A673 (cell line): ENCODE measurements at regions of chr13 and their contacts with region 1.

Region 1: GRCh38 chr13:81722456-81722855 is 1381.5 kb upstream of the SPRY2 start:
- DNase-seq: no peak
- H3K4me3 ChIP-seq: no peak overlapping the region
- H3K27ac ChIP-seq: no peak overlapping the region
- H3K4me1 ChIP-seq: no peaks in the 10 kb centered on the region
- H3K27me3 ChIP-seq: no peaks in the 10 kb centered on the region
- CTCF ChIP-seq: no peak

Region 2: DNA sequence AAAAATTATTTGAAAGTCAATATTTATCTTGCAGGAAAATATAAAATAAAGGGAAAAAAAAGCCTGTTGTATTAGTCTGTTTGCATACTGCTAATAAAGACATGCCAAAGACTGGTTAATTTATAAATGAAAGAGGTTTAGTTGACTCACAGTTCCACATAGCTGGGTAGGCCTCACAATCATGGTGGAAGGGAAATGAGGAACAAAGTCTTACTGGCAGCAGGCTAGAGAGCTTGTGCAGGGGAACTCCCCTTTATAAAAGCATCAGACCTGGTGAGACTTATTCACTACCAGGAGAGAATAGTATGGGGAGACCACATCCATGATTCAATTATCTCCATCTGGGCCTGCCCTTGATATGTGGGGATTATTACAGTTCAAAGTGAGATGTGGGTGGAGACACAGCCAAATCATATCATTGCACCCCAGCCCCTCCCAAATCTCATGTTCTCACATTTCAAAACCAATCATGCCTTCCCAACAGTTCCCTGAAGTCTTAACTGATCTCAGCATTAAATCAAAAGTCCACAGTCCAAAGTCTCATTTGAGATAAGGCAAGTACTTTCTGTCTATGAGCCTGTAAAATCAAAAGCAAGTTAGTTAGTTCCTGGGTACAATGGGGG is 35.0 kb after region 1 on chr13:
- CTCF ChIA-PET with region 1: no interaction called
- POLR2A ChIA-PET with region 1: no interaction called
- intact Hi-C with region 1: loop called (anchors 5 kb)
- DNase-seq: no peak
- H3K4me3 ChIP-seq: no peak overlapping the region
- H3K27ac ChIP-seq: no peak overlapping the region
- H3K4me1 ChIP-seq: no peaks in the 10 kb centered on the region
- H3K27me3 ChIP-seq: no peaks in the 10 kb centered on the region
- CTCF ChIP-seq: no peak